T-cell (primary cell): ENCODE measurements at regions of chr6 and their contacts with region 1.

Region 1: GRCh38 chr6:142207265-142207877 is 60.3 kb downstream of the VTA1 start:
- DNase-seq: peak in 32 of 35 experiments; percentile 7 to 72 (median 28)
- ATAC-seq: peak; percentile 31 to 66 (median 52)
- H3K4me3 ChIP-seq: no peak overlapping the region
- H3K4me3 Mint-ChIP-seq: no peak overlapping the region
- H3K27ac ChIP-seq: no peak overlapping the region
- H3K27ac Mint-ChIP-seq: peak overlapping the region in 1 of 2 donors; percentile 55
- H3K4me1 ChIP-seq: no peaks in the 10 kb centered on the region
- H3K4me1 Mint-ChIP-seq: peaks cover 0 to 2% (median 0%) of the 10 kb centered on the region in 3 donors
- H3K27me3 ChIP-seq: no peaks in the 10 kb centered on the region
- H3K27me3 Mint-ChIP-seq: no peaks in the 10 kb centered on the region

Region 2: GRCh38 chr6:142146828-142147662 is 60.3 kb before region 1 on chr6 and contains the starts of genes NMBR and VTA1:
- CTCF ChIA-PET with region 1: interaction called, 6 to 27 read pairs
- POLR2A ChIA-PET with region 1: interaction called in 1 of 2 experiments, 3 read pairs
- DNase-seq: peak; percentile 84 to 99 (median 97)
- ATAC-seq: peak; percentile 93 to 97 (median 97)
- H3K4me3 ChIP-seq: peak within 1 kb of the TSS; percentile 94 to 96
- H3K4me3 Mint-ChIP-seq: peak within 1 kb of the TSS; percentile 94 to 97 (median 95)
- H3K27ac ChIP-seq: peak within 1 kb of the TSS; percentile 68
- H3K27ac Mint-ChIP-seq: peak within 1 kb of the TSS; percentile 93
- H3K4me1 ChIP-seq: peaks cover 4 to 20% of the 10 kb centered on the region in 2 experiments
- H3K4me1 Mint-ChIP-seq: peaks cover 62 to 68% (median 62%) of the 10 kb centered on the region in 3 donors
- H3K27me3 ChIP-seq: no peaks in the 10 kb centered on the region
- H3K27me3 Mint-ChIP-seq: no peaks in the 10 kb centered on the region
- total RNA-seq, gene NMBR: not detected
- total RNA-seq, gene VTA1: 19.2 to 31.5 (median 29.0) TPM

Region 3: DNA sequence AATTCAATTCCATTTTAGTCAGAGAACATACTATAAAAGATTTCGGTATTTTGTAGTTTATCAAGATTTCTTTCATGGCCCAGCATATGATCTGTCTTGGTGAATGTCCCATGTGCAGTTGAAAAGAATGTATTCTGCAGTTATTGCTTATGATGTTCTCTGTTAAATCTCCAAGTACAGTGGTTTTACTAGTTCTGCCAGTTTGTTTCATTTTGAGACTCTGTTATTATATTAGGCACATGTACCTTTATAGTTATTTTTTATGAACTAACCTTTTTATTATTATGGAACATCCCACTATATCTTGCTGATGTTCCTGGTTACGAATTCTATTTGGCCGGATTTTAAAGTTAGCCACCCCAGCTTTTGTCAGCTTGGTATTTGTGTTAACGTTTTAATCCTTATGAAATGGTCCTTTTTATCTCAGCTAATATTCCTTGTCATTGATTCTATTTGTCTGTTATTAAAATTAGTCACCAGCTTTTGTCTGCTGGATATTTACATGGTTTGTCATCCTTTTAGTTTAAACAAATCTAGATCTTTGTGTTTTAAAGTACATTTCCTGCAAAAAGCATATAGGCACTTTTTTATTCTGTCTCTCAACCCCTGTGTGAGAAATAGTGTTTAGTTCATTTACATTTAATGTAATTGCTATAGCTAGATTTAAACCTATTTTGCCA is 11.4 kb before region 1 on chr6:
- CTCF ChIA-PET with region 1: interaction called, 10 read pairs
- POLR2A ChIA-PET with region 1: no interaction called
- DNase-seq: no peak
- ATAC-seq: no peak
- H3K4me3 ChIP-seq: no peak overlapping the region
- H3K4me3 Mint-ChIP-seq: no peak overlapping the region
- H3K27ac ChIP-seq: no peak overlapping the region
- H3K27ac Mint-ChIP-seq: peak overlapping the region; percentile 31 to 48
- H3K4me1 ChIP-seq: peaks cover 0 to 13% of the 10 kb centered on the region in 2 experiments
- H3K4me1 Mint-ChIP-seq: peaks cover 43 to 53% (median 48%) of the 10 kb centered on the region in 3 donors
- H3K27me3 ChIP-seq: no peaks in the 10 kb centered on the region
- H3K27me3 Mint-ChIP-seq: no peaks in the 10 kb centered on the region

Region 4: GRCh38 chr6:142249266-142249665 is 41.9 kb after region 1 on chr6:
- CTCF ChIA-PET with region 1: no interaction called
- POLR2A ChIA-PET with region 1: no interaction called
- DNase-seq: no peak
- ATAC-seq: no peak
- H3K4me3 ChIP-seq: no peak overlapping the region
- H3K4me3 Mint-ChIP-seq: no peak overlapping the region
- H3K27ac ChIP-seq: no peak overlapping the region
- H3K27ac Mint-ChIP-seq: no peak overlapping the region
- H3K4me1 ChIP-seq: no peaks in the 10 kb centered on the region
- H3K4me1 Mint-ChIP-seq: no peaks in the 10 kb centered on the region
- H3K27me3 ChIP-seq: no peaks in the 10 kb centered on the region
- H3K27me3 Mint-ChIP-seq: peaks cover 3 to 8% of the 10 kb centered on the region in 2 donors

Region 5: GRCh38 chr6:142702501-142703460 is 495.4 kb after region 1 on chr6:
- CTCF ChIA-PET with region 1: no interaction called
- POLR2A ChIA-PET with region 1: no interaction called
- DNase-seq: peak in 1 of 35 experiments; percentile 25
- ATAC-seq: no peak
- H3K4me3 ChIP-seq: no peak overlapping the region
- H3K4me3 Mint-ChIP-seq: no peak overlapping the region
- H3K27ac ChIP-seq: no peak overlapping the region
- H3K27ac Mint-ChIP-seq: no peak overlapping the region
- H3K4me1 ChIP-seq: peaks cover 0 to 3% of the 10 kb centered on the region in 2 experiments
- H3K4me1 Mint-ChIP-seq: peaks cover 18 to 26% (median 24%) of the 10 kb centered on the region in 3 donors
- H3K27me3 ChIP-seq: no peaks in the 10 kb centered on the region
- H3K27me3 Mint-ChIP-seq: no peaks in the 10 kb centered on the region

Region 6: GRCh38 chr6:144123836-144124235 is 1916.5 kb after region 1 on chr6:
- CTCF ChIA-PET with region 1: interaction called in 1 of 2 experiments, 10 read pairs
- POLR2A ChIA-PET with region 1: no interaction called
- DNase-seq: no peak
- ATAC-seq: no peak
- H3K4me3 ChIP-seq: no peak overlapping the region
- H3K4me3 Mint-ChIP-seq: no peak overlapping the region
- H3K27ac ChIP-seq: no peak overlapping the region
- H3K27ac Mint-ChIP-seq: no peak overlapping the region
- H3K4me1 ChIP-seq: no peaks in the 10 kb centered on the region
- H3K4me1 Mint-ChIP-seq: no peaks in the 10 kb centered on the region
- H3K27me3 ChIP-seq: peaks cover 0 to 3% of the 10 kb centered on the region in 2 experiments
- H3K27me3 Mint-ChIP-seq: peaks cover 1 to 3% of the 10 kb centered on the region in 2 donors